ENCODE measurements at regions of chr13 and their contacts with region 1.

Region 1: DNA sequence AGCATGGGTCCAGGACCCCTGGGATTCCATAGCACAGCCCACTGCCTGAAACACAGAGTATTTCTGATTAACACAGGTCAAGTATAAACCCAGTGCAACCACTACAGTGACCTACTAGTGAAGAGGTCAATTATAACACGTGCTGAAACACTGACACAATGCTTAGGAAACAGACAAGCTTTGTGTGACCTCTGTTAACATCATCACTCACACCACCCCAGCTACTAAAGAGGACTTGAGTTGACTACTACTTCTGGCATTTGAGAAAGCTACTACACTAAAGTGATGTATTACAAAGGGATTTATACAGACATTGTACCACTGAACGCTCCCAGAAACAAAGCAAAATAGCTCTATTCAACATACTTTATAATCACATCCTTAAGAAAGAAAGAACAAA is 1935.9 kb upstream of the PCDH20 start:
- DNase-seq: no peak
- H3K4me3 ChIP-seq: no peak overlapping the region
- H3K27ac ChIP-seq: no peak overlapping the region
- H3K4me1 ChIP-seq: no peaks in the 10 kb centered on the region
- H3K27me3 ChIP-seq: no peaks in the 10 kb centered on the region
- CTCF ChIP-seq: no peak
- POLR2A ChIP-seq: no peak

Region 2: GRCh38 chr13:63855474-63856118 is 504.1 kb after region 1 on chr13:
- intact Hi-C with region 1: no loop called
- DNase-seq: no peak
- H3K4me3 ChIP-seq: no peak overlapping the region
- H3K27ac ChIP-seq: no peak overlapping the region
- H3K4me1 ChIP-seq: no peaks in the 10 kb centered on the region
- H3K27me3 ChIP-seq: no peaks in the 10 kb centered on the region
- CTCF ChIP-seq: no peak
- POLR2A ChIP-seq: no peak

Region 3: DNA sequence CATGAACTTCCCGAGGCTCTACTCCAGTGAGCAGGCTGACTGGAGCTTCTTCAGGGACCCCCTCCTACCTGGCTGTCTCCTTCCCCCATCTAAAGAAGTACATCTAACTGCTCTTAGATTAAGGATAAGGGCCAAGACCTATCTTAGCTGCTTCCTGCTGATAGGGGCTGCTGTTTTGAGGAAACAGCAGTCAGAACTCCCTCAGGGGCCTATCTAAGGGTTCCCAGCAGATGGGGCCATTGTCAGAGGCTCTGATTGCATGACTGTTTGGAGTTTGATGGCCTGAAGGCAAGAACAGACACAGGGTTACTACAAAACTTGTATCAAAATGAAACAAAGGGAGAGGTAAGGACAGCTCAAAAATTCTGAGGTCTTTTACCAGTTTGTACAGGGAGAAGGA is 701.0 kb after region 1 on chr13:
- intact Hi-C with region 1: loop called (anchors 5 kb)
- DNase-seq: no peak
- H3K4me3 ChIP-seq: no peak overlapping the region
- H3K27ac ChIP-seq: no peak overlapping the region
- H3K4me1 ChIP-seq: no peaks in the 10 kb centered on the region
- H3K27me3 ChIP-seq: no peaks in the 10 kb centered on the region
- CTCF ChIP-seq: no peak
- POLR2A ChIP-seq: no peak